ENCODE measurements at regions of chr2 and their contacts with region 1.

Region 1: GRCh38 chr2:200713003-200713703 is 98.6 kb upstream of the BZW1 start:
- H3K4me3 ChIP-seq: peak overlapping the region; percentile 25
- H3K27ac ChIP-seq: peak overlapping the region; percentile 2; the same call in 1 of the 2 replicates
- H3K4me1 ChIP-seq: no peaks in the 10 kb centered on the region
- CTCF ChIP-seq: peak; percentile 76

Region 2: DNA sequence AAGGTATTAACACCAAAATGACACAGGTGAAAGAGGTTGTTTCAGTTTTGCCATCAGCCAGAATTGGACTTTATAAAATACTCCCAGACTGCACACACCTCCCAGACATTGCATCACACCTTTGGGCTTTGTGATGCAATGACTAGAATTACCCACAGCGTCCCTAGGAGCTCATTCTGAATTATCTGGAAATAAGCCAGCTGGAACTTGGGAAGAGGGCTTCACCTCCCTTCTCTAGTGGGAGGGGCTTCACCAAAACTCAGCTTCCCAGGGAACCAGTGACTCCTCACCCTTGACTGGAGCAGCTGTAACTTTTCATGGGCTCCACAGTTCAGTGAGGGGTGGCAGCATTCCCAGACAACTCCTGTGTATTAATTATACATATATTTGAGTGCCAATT is 15.5 kb after region 1 on chr2:
- CTCF ChIA-PET with region 1: interaction called, 65 read pairs
- POLR2A ChIA-PET with region 1: interaction called, 5 read pairs
- H3K4me3 ChIP-seq: no peak overlapping the region
- H3K27ac ChIP-seq: no peak overlapping the region
- H3K4me1 ChIP-seq: no peaks in the 10 kb centered on the region
- CTCF ChIP-seq: no peak

Measured in HEK293 (cell line).